ENCODE measurements at regions of chr17 and their contacts with region 1.

Region 1: GRCh38 chr17:4263282-4264215 is at the start of gene ANKFY1:
- DNase-seq: peak; percentile 99
- H3K4me3 Mint-ChIP-seq: peak within 1 kb of the TSS; percentile 89
- H3K27ac Mint-ChIP-seq: peak within 1 kb of the TSS; percentile 82
- H3K4me1 Mint-ChIP-seq: peaks cover 35% of the 10 kb centered on the region
- H3K27me3 Mint-ChIP-seq: no peaks in the 10 kb centered on the region
- total RNA-seq, gene ANKFY1: 34.6 to 40.5 TPM

Region 2: DNA sequence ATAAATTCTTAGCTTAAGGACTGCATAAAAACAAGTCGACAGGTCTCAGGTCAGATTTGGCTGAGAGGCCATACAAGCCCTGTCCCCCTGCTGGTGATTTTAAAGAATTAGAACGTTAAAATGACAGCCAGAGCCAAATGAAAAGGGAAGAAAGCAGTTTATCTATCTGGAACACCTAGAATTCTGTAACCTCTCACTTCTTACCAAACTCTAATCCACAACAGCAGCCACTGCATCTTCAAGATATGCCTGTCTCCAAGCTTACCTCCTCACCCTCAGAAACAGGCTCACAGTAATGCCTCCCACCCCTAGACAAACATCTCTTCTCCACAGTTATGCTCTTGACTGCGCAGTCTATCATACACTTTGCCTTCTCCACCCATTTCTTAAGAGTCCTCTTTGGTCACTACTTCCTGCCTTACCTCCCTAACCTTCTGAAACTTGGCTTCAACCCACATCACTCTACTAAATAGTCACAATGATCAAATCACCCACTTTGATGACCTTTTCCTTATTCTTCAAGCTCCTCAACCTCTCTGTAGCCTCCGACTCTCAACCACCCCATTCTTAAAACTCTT is 14.0 kb before region 1 on chr17:
- CTCF ChIA-PET with region 1: interaction called, 18 read pairs
- POLR2A ChIA-PET with region 1: interaction called, 3 read pairs
- intact Hi-C with region 1: no loop called
- DNase-seq: no peak
- H3K4me3 Mint-ChIP-seq: no peak overlapping the region
- H3K27ac Mint-ChIP-seq: no peak overlapping the region
- H3K4me1 Mint-ChIP-seq: peaks cover 48% of the 10 kb centered on the region
- H3K27me3 Mint-ChIP-seq: no peaks in the 10 kb centered on the region

Measured in activated CD4-positive, alpha-beta memory T cell treated with anti-CD3 and anti-CD28 coated beads for 36 hours (primary cell).